ENCODE measurements at regions of chr1 and their contacts with region 1.

Region 1: DNA sequence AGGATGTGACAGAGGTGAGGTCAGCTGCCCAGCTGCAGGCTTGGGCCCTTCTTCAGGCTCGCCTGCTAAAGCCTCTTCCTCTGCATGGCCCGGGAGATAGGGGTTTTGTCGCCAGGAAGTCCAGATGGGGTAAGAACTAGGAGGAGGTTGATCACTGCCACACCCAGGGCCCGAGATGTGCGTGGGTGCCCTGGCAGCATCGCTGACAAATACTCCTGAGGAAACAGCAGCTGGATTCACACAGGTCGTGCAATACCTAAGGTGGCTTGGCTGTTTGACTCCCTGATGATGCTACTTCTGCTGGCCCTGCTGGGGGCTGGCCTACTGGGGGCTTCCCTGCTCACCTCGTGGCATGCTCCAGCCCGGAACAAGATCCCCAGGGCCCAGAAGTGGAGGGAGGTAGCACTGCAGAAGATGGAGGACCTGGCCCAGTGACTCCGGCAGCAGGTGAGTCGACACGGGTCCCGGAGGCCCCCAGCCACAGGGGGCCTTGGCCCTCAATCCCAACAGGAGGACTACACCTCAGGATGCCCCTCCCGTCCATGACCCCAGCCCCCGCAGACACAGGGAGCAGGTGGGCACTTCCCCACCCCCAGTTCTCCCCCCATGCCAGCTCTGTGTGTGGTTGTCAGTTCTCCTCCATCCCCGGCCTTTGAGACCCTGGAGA is 29.6 kb downstream of the FAAH start:
- DNase-seq: no peak
- H3K4me3 ChIP-seq: no peak overlapping the region
- CTCF ChIP-seq: no peak

Region 2: DNA sequence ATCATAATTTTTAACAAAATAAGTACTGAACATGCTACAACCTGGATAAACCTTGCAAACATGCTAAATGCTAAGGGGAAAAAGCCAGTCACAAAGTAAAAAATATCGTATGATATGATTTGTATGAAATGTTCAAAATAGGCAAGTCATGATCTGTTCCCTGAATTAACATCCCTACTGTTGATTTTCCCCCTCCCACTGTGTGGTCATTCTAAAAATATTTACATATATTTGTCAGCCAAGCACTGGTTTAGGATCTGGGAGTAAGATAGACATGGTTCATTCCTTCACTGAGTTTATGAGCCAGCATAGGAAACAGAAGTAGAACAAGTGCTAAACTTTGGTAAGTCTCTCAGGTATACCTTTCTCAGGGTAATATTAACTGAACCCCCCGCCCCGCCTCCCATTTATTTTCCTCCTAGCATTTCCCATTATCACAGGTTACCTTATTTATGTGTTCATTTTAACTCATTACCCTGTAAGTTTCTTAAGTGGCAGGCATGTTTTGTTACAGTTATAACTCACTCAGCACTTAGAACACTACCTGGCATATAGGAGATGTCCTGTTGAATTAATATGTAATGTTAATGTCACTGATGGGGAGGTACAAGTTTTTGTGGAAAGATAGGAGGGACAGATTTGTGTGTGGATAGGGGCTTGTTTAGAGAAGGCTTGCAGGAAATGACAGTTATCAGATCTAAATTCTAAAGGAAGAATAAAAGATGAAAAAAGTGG is 107.9 kb before region 1 on chr1:
- CTCF ChIA-PET with region 1: no interaction called
- POLR2A ChIA-PET with region 1: no interaction called
- DNase-seq: no peak
- H3K4me3 ChIP-seq: no peak overlapping the region
- CTCF ChIP-seq: no peak

Region 3: DNA sequence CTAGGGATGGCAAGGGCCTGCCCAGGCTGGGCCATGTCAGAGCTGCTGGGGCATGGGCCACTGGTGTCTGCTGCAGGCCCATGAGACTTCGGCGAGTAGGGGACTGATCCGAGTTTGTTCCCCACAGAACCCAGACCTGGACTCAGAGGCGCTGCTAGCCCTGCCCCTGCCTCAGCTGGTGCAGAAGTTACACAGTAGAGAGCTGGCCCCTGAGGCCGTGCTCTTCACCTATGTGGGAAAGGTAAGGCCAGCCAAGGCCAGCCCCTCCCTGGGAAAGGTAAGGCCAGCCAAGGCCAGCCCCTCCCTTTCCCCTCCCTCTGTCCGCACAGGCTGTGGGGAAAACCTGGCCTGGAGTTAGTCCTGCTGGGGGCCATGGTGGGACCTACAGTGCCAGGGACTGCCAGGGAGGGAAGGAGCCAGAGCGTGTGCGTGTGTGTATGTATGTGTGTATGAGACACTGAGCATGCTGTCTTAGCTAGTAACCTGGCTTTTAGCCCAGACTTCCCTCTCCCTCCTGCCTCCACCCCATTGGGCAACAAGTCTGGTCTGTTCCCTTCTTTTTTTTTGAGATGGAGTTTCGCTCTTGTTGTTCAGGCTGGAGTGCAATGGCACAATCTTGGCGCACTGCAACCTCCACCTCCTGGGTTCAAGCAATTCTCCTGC is 21.6 kb before region 1 on chr1:
- CTCF ChIA-PET with region 1: interaction called, 33 read pairs
- POLR2A ChIA-PET with region 1: no interaction called
- DNase-seq: peak; percentile 87
- H3K4me3 ChIP-seq: no peak overlapping the region
- CTCF ChIP-seq: no peak